ENCODE measurements at regions of chr1 and their contacts with region 1.

Region 1: GRCh38 chr1:26102526-26102925 is 9.1 kb upstream of the PDIK1L start:
- DNase-seq: no peak
- H3K4me3 ChIP-seq: no peak overlapping the region
- H3K27ac ChIP-seq: no peak overlapping the region
- H3K4me1 ChIP-seq: no peaks in the 10 kb centered on the region
- H3K27me3 ChIP-seq: no peaks in the 10 kb centered on the region
- CTCF ChIP-seq: no peak

Region 2: DNA sequence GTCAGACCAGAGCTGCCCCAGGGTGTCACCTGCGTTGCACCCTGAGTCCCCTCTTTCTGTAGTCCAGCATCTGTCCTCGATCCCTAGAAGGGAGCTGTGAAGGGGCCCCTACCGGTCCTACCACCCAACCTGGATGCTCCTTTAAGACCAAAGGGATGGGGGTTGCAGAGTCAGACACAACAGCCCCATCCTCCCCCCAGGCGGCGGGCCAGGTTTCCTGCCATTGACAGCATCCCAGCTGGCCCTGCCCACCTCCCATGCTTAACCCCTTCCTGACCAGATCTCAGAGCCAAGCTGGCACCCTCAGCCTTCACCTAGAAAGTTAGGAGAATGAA is 54.1 kb after region 1 on chr1:
- intact Hi-C with region 1: loop called (anchors 10 kb)
- DNase-seq: peak in 4 of 5 donors; percentile 39 to 73 (median 50)
- H3K4me3 ChIP-seq: peak overlapping the region in 1 of 3 donors; percentile 47
- H3K27ac ChIP-seq: peak overlapping the region in 1 of 2 donors; percentile 47
- H3K4me1 ChIP-seq: peaks cover 0 to 6% (median 0%) of the 10 kb centered on the region in 3 donors
- H3K27me3 ChIP-seq: no peaks in the 10 kb centered on the region
- CTCF ChIP-seq: no peak